PC-9 (cell line): ENCODE measurements at regions of chr5 and their contacts with region 1.

Region 1: GRCh38 chr5:128083033-128083810 is at the start of gene SLC12A2:
- DNase-seq: peak; percentile 87 to 88
- H3K4me3 ChIP-seq: peak within 1 kb of the TSS; percentile 97
- H3K27ac ChIP-seq: peak within 1 kb of the TSS; percentile 71
- H3K4me1 ChIP-seq: peaks cover 60% of the 10 kb centered on the region
- H3K27me3 ChIP-seq: no peaks in the 10 kb centered on the region
- CTCF ChIP-seq: no peak
- total RNA-seq, gene SLC12A2: 24.4 and 29.3 TPM in 2 replicates

Region 2: GRCh38 chr5:127746756-127747155 is 336.5 kb before region 1 on chr5:
- CTCF ChIA-PET with region 1: no interaction called
- POLR2A ChIA-PET with region 1: no interaction called
- intact Hi-C with region 1: no loop called
- DNase-seq: peak in 1 of 2 experiments; percentile 54
- H3K4me3 ChIP-seq: no peak overlapping the region
- H3K27ac ChIP-seq: no peak overlapping the region
- H3K4me1 ChIP-seq: no peaks in the 10 kb centered on the region
- H3K27me3 ChIP-seq: no peaks in the 10 kb centered on the region
- CTCF ChIP-seq: peak; percentile 58

Region 3: DNA sequence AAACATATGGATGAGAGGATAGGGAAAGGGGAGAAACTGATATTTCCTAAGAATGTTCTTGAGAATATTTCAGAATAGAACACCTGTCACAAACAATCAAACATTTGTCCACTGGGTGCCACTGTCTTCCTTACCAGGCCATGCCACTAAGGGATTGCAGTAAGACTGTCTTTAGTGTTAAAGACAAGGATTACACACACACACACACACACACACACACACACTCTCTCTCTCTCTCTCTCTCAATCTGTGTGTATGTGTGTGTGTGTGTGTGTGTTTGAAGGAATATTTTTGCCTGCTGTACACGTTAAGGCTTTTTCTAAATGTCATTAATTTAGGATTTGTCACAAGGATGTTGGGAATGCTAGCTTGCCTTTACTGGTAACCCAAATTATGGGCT is 325.6 kb before region 1 on chr5:
- CTCF ChIA-PET with region 1: no interaction called
- POLR2A ChIA-PET with region 1: no interaction called
- intact Hi-C with region 1: loop called (anchors 2 kb)
- DNase-seq: peak; percentile 15 to 45
- H3K4me3 ChIP-seq: no peak overlapping the region
- H3K27ac ChIP-seq: no peak overlapping the region
- H3K4me1 ChIP-seq: no peaks in the 10 kb centered on the region
- H3K27me3 ChIP-seq: no peaks in the 10 kb centered on the region
- CTCF ChIP-seq: peak; percentile 72

Region 4: GRCh38 chr5:127934791-127935256 is 148.4 kb before region 1 on chr5:
- CTCF ChIA-PET with region 1: no interaction called
- POLR2A ChIA-PET with region 1: no interaction called
- intact Hi-C with region 1: loop called (anchors 1 kb)
- DNase-seq: peak; percentile 76 to 100
- H3K4me3 ChIP-seq: no peak overlapping the region
- H3K27ac ChIP-seq: peak overlapping the region; percentile 78
- H3K4me1 ChIP-seq: peaks cover 54% of the 10 kb centered on the region
- H3K27me3 ChIP-seq: no peaks in the 10 kb centered on the region
- CTCF ChIP-seq: peak; percentile 51

Region 5: DNA sequence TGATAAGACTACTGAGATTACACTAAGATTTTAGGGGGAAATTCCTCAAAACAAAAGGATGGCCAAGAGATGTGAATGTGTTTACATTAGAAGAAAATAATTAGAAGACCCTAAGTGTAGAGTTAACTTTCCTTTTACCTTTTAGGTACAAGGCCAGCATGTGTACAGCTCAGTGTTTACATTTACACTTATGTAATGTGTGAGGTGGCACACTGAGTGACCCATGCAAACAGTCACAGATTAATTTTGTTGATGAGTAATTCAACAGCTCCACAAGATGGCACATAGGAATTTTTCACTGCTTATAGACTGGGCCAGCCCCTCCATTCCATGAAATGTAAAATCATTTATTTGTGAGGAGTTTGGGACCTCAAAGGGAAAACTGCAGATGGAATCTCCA is 89.8 kb before region 1 on chr5:
- CTCF ChIA-PET with region 1: interaction called, 17 read pairs
- POLR2A ChIA-PET with region 1: no interaction called
- intact Hi-C with region 1: loop called (anchors 2 kb)
- DNase-seq: no peak
- H3K4me3 ChIP-seq: no peak overlapping the region
- H3K27ac ChIP-seq: no peak overlapping the region
- H3K4me1 ChIP-seq: peaks cover 4% of the 10 kb centered on the region; the same call in 1 of the 2 replicates
- H3K27me3 ChIP-seq: no peaks in the 10 kb centered on the region
- CTCF ChIP-seq: no peak

Region 6: DNA sequence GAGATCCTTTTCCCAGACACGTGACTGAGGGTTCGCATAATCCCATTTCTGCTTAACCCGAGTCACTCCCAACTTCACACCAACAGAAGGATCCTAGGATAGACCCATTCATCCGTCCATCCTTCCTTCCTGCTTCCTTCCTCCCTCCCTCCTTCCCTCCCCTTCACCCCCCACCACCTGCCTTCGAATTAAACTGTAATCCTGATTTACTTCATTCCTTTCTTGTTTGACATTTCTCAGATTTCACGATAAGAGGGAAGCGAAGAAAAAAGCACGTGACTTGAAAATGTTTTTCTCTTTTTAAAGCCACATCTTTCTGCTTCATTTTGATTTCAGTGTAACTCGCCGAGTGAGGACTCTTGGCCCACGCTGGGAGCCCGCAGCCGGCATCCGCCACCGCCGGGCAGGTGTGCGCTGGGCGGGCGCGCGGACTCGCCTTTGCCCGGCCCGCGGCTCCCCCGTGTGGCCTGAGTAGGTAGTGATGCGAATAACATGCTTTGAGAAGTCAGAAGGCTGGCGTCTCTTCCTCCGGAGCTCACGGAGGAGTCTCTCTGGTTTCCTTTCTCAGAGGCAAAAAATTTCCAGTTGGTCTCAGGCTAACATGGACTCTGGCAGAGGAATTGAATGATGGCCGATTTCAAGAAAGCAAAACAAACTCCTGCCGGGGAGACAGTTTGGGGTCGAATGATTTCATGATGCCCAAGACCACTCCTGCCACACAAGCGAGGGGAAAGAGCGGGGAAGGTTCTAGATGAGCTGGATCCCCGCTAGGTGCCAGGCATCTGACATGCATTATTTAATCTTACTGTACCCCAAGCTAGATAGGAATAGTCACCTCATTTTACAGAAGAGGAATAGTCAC is 118.1 kb after region 1 on chr5:
- CTCF ChIA-PET with region 1: interaction called, 3 read pairs
- POLR2A ChIA-PET with region 1: no interaction called
- intact Hi-C with region 1: loop called (anchors 1 kb)
- DNase-seq: peak; percentile 86 to 91
- H3K4me3 ChIP-seq: peak overlapping the region; percentile 44; the same call in 1 of the 2 replicates
- H3K27ac ChIP-seq: peak overlapping the region; percentile 99
- H3K4me1 ChIP-seq: peaks cover 50% of the 10 kb centered on the region
- H3K27me3 ChIP-seq: no peaks in the 10 kb centered on the region
- CTCF ChIP-seq: peak; percentile 90